ENCODE measurements at regions of chr6 and their contacts with region 1.

Region 1: GRCh38 chr6:84921891-84922290 is 157.5 kb upstream of the TBX18 start:
- DNase-seq: no peak
- ATAC-seq: no peak

Region 2: GRCh38 chr6:83169511-83169910 is 1752.4 kb before region 1 on chr6:
- intact Hi-C with region 1: loop called (anchors 5 kb)
- DNase-seq: no peak
- ATAC-seq: no peak

Region 3: GRCh38 chr6:85537055-85537494 is 615.2 kb after region 1 on chr6:
- intact Hi-C with region 1: no loop called
- DNase-seq: no peak
- ATAC-seq: no peak

Measured in sciatic nerve (tissue), 2 donors.